HEK293 (cell line): ENCODE measurements at regions of chr17 and their contacts with region 1.

Region 1: GRCh38 chr17:41665566-41666236 is 23.0 kb upstream of the EIF1 start:
- H3K4me3 ChIP-seq: peak overlapping the region; percentile 25
- H3K27ac ChIP-seq: peak overlapping the region; percentile 45; the same call in 1 of the 2 replicates
- H3K4me1 ChIP-seq: peaks cover 3% of the 10 kb centered on the region
- CTCF ChIP-seq: peak; percentile 98

Region 2: GRCh38 chr17:40818733-40819527 is 846.8 kb before region 1 on chr17:
- CTCF ChIA-PET with region 1: interaction called, 10 read pairs
- POLR2A ChIA-PET with region 1: interaction called, 3 read pairs
- H3K4me3 ChIP-seq: peak overlapping the region; percentile 79
- H3K27ac ChIP-seq: peak overlapping the region; percentile 79
- H3K4me1 ChIP-seq: peaks cover 2% of the 10 kb centered on the region; the same call in 1 of the 2 replicates
- CTCF ChIP-seq: no peak

Region 3: DNA sequence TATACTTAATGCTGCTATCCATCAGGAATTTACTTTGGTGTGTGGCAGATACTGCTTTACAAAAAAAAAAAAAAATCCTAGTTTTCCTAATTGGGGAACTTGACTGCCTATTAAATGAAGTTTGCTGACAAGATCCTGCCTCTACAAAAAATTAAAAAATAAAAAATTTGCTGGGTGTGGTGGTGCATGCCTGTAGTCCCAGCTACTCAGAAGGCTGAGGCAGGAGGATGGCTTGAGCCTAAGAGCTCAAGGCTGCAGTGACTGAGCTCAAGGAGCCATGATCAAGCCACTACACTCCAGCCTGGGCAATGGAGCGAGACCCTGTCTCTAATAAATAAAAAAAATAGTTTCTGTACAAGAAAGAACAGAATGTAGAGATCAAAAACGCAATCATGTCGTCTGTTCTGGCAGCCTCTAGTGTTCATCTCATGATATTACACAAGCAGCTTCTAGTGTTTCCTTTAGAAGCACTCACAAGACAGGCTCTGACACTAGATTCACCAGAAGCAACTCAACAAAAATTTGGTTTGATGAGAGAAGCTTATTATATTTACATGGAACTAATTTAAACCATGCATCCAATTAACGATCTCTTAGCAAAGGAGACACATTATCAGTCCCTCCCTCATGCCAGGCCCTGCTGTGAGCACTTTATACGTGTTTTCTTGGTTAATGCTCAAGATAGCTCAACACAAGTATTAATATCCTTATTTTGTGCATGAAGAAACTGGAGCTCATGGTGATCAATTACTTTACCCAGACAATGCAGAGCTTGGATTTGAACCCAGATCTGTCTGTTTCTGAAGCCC is 343.4 kb before region 1 on chr17:
- CTCF ChIA-PET with region 1: interaction called, 21 read pairs
- POLR2A ChIA-PET with region 1: no interaction called
- H3K4me3 ChIP-seq: no peak overlapping the region
- H3K27ac ChIP-seq: no peak overlapping the region
- H3K4me1 ChIP-seq: no peaks in the 10 kb centered on the region
- CTCF ChIP-seq: no peak; the same call in 1 of the 2 replicates

Region 4: GRCh38 chr17:41496820-41497408 is 168.8 kb before region 1 on chr17:
- CTCF ChIA-PET with region 1: interaction called, 24 read pairs
- POLR2A ChIA-PET with region 1: interaction called, 4 read pairs
- H3K4me3 ChIP-seq: no peak overlapping the region
- H3K27ac ChIP-seq: no peak overlapping the region
- H3K4me1 ChIP-seq: peaks cover 6% of the 10 kb centered on the region
- CTCF ChIP-seq: peak; percentile 95

Region 5: DNA sequence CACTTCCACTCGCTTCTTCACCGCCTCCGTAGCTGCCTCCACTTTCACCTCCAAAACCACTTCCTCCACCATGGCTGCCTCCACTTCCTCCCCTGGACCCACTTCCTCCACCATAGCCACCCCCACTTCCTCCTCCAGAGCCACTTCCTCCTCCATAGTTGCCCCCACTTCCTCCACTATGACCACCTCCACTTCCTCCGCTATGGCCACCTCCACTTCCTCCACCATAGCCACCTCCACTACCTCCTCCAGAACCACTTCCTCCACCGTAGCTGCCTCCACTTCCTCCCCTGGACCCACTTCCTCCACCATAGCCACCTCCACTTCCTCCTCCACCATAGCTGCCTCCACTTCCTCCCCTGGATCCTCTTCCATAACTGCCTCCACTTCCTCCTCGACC is 98.4 kb before region 1 on chr17:
- CTCF ChIA-PET with region 1: interaction called, 115 read pairs
- POLR2A ChIA-PET with region 1: no interaction called
- H3K4me3 ChIP-seq: no peak overlapping the region
- H3K27ac ChIP-seq: no peak overlapping the region
- H3K4me1 ChIP-seq: no peaks in the 10 kb centered on the region
- CTCF ChIP-seq: no peak

Region 6: GRCh38 chr17:41648411-41649195 is 17.1 kb before region 1 on chr17:
- CTCF ChIA-PET with region 1: interaction called, 567 read pairs
- POLR2A ChIA-PET with region 1: interaction called, 8 read pairs
- H3K4me3 ChIP-seq: peak overlapping the region; percentile 42
- H3K27ac ChIP-seq: no peak overlapping the region; the same call in 1 of the 2 replicates
- H3K4me1 ChIP-seq: no peaks in the 10 kb centered on the region
- CTCF ChIP-seq: peak; percentile 93

Region 7: DNA sequence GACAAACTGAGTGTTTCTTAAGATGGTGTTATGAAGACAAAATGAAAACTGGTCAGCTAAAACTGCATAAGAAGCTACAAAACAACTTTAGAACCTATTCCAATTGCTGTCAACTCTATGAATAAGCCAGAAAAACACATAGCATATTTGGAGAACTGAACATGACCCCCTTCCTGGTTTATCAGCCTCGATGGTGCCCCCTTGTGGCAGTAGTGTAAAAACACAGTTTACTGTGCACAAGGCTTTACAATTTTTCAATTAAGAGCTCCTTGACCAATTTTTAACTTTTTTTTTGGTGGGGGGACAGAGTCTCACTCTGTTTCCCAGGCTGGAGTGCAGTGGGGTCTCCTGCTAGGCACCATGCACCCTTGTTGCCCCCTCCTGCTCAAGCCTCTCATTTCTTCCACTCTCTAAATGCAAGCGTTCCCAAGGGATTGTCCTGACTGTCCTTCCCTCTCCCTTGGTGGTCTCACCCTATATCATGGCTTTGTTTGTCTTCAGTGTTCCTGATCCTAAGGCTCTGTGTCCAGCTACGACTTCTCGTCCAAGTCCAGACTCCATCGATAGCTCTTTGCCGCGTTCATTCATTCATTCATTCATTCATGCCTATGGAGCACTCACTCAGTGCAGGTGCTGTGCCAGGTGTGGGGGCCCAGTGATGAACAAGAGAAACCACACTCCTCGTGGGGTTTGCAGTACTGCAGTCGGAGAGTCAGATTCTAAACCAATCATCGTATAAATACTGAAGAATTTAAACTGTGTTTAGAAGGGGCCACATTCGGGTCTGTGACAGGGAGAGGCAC is 30.5 kb after region 1 on chr17:
- CTCF ChIA-PET with region 1: interaction called, 13 read pairs
- POLR2A ChIA-PET with region 1: no interaction called
- H3K4me3 ChIP-seq: no peak overlapping the region
- H3K27ac ChIP-seq: no peak overlapping the region
- H3K4me1 ChIP-seq: peaks cover 3% of the 10 kb centered on the region; the same call in 1 of the 2 replicates
- CTCF ChIP-seq: peak; percentile 50; the same call in 1 of the 2 replicates

Region 8: DNA sequence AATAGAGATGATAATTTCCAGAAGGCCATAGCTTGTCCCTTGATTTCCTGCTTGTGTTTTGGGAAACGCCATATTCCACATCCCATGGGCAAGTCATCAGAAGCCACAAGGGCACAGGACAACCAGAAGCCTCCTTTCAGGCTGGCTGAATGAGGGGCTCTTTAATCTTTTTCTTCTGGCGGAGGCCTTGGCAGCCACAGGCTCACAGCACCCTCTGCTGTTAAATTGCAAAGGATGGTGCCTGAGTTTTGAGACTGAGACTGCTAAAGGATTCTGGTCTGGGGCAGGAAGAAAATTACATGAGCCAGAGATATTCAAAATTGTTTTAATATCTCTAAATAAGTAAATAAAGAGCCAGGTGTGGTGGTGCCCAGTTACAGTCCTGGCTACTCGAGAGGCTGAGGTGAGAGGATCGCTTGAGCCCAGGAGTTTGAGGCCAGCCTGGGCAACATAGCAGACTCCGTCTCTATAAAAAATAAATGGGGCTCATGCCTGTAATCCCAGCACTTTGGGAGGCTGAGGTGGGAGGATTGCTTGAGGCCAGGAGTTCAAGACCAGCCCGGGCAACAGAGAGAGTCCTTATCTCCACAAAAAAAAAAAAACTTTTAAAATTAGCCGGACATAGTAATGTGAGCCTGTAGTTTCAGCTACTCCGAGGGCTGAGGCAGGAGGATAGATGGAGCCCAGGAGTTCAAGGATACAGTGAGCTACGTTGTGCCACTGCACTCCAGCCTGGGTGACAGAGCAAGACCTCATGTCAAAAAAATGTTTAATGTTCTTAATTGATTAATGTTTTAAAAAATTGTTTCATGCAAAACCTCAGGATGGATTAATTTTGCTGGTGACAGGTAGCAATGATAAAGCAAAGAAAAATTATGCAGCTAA is 1272.3 kb after region 1 on chr17:
- CTCF ChIA-PET with region 1: no interaction called
- POLR2A ChIA-PET with region 1: no interaction called
- H3K4me3 ChIP-seq: no peak overlapping the region
- H3K27ac ChIP-seq: no peak overlapping the region
- H3K4me1 ChIP-seq: no peaks in the 10 kb centered on the region
- CTCF ChIP-seq: peak; percentile 66